Naive thymus-derived CD4-positive, alpha-beta T cell (primary cell): ENCODE measurements at regions of chr14 and their contacts with region 1.

Region 1: DNA sequence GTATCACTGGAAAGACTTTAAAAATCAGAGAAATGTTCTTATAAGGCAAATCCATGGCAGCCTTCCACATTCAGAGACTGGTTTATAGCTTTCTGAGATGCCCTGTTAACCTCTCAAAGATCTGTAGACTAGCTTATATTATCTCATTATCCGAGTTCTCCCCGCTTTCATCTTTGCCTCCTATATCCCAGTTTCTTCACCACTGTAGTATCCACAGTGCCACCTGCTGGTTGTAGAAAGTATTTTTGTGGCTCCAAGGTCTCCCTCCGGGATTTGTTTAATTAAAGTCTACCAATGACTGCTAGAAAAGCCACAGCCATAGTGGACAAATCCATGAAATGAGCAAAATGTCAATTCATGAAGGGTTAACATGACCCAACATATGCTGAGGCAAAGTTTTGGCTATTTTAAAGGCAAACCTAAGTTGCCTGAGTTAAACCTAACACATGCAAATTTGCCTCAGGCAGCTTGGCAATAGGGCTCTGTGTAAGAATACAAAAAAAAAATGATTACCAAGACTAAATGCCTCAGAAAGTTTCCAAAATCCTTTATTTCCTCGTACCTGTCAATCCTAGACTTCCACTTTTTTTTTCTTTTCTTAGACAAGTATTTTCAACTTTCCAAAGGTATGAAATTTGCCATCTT is 218.8 kb upstream of the BMP4 start:
- DNase-seq: peak in 6 of 9 donors; percentile 6 to 34 (median 17)
- ATAC-seq: peak; percentile 45
- H3K4me3 ChIP-seq: no peak overlapping the region
- H3K4me3 Mint-ChIP-seq: no peak overlapping the region
- H3K27ac ChIP-seq: no peak overlapping the region
- H3K27ac Mint-ChIP-seq: no peak overlapping the region
- H3K4me1 ChIP-seq: no peaks in the 10 kb centered on the region
- H3K4me1 Mint-ChIP-seq: no peaks in the 10 kb centered on the region
- H3K27me3 ChIP-seq: no peaks in the 10 kb centered on the region
- H3K27me3 Mint-ChIP-seq: peaks cover 29 to 69% (median 60%) of the 10 kb centered on the region in 5 donors

Region 2: DNA sequence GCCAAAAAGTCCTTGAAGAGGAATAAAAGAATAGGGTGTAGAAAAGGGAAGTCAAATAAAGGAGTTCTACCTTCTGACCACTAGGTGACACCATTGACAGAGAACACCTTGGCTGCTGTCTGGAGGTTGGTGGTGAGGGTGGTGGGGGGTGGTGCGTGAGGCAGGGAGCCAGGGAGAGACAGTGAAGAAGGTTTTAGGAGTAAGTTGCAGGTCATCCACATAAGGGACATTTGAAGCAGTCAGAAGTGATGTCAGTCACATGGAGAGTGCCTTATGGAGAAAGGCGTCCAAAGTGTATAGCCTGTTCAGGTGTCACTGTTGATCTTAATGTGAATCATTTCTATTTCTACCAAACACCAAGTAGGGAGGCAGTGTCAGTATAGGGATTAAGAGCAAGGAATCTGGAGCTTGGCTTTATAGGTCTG is 743.0 kb before region 1 on chr14:
- CTCF ChIA-PET with region 1: no interaction called
- POLR2A ChIA-PET with region 1: no interaction called
- intact Hi-C with region 1: loop called in 1 of 2 experiments (anchors 5 kb)
- DNase-seq: no peak
- ATAC-seq: no peak
- H3K4me3 ChIP-seq: no peak overlapping the region
- H3K4me3 Mint-ChIP-seq: no peak overlapping the region
- H3K27ac ChIP-seq: no peak overlapping the region
- H3K27ac Mint-ChIP-seq: no peak overlapping the region
- H3K4me1 ChIP-seq: no peaks in the 10 kb centered on the region
- H3K4me1 Mint-ChIP-seq: no peaks in the 10 kb centered on the region
- H3K27me3 ChIP-seq: no peaks in the 10 kb centered on the region
- H3K27me3 Mint-ChIP-seq: peaks cover 0 to 2% (median 0%) of the 10 kb centered on the region in 5 donors

Region 3: GRCh38 chr14:53539489-53540126 is 635.8 kb before region 1 on chr14:
- CTCF ChIA-PET with region 1: no interaction called
- POLR2A ChIA-PET with region 1: no interaction called
- intact Hi-C with region 1: loop called in 1 of 2 experiments (anchors 1 kb)
- DNase-seq: peak in 5 of 9 donors; percentile 1 to 31 (median 14)
- ATAC-seq: no peak
- H3K4me3 ChIP-seq: no peak overlapping the region
- H3K4me3 Mint-ChIP-seq: no peak overlapping the region
- H3K27ac ChIP-seq: no peak overlapping the region
- H3K27ac Mint-ChIP-seq: no peak overlapping the region
- H3K4me1 ChIP-seq: no peaks in the 10 kb centered on the region
- H3K4me1 Mint-ChIP-seq: no peaks in the 10 kb centered on the region
- H3K27me3 ChIP-seq: no peaks in the 10 kb centered on the region
- H3K27me3 Mint-ChIP-seq: peaks cover 0 to 9% (median 3%) of the 10 kb centered on the region in 5 donors

Region 4: DNA sequence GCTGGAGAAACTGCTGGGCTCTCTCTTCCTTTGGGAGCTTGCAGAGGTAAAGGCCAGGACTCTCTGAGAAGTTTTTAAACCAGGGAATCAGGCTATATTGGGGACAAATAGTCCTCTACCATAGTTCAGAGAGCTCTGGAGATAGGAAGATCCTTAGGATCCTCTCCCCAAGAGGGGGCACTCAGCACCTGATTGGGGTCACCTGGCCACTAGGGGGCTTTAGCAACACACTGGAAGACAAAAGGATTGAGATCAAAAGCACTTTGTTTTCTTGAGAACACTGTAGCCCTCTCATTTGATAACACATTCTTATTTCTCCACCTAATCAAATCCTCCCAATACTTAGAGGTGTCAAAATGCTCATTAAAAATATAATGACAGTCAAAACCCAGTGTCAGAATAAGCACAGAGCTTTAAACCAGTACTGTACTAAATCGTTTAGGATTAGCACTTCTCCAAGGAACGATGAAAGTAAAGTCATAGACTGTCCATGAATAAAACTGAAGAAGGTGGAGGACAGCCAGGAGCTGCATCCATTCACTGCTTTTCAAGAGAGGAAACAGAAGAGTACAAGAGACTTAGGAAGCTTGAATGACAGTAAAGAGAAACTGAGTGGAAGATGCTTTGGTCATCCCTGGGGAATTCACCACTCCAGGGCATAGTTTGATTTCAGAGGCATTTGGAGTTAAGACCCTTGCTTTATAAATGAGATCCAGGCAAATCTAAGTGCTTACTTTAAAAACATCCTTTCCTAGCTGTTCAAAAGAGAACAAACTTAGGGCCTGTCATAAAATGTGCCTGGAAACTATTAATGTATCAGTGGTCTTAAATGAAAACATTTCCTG is 245.3 kb before region 1 on chr14:
- CTCF ChIA-PET with region 1: interaction called, 10 read pairs
- POLR2A ChIA-PET with region 1: no interaction called
- intact Hi-C with region 1: loop called in 1 of 2 experiments (anchors 10 kb)
- DNase-seq: peak in 3 of 9 donors; percentile 14 to 47 (median 29)
- ATAC-seq: no peak
- H3K4me3 ChIP-seq: no peak overlapping the region
- H3K4me3 Mint-ChIP-seq: no peak overlapping the region
- H3K27ac ChIP-seq: no peak overlapping the region
- H3K27ac Mint-ChIP-seq: no peak overlapping the region
- H3K4me1 ChIP-seq: no peaks in the 10 kb centered on the region
- H3K4me1 Mint-ChIP-seq: no peaks in the 10 kb centered on the region
- H3K27me3 ChIP-seq: no peaks in the 10 kb centered on the region
- H3K27me3 Mint-ChIP-seq: peaks cover 8 to 26% (median 11%) of the 10 kb centered on the region in 5 donors